Endothelial cell of umbilical vein (primary cell): ENCODE measurements at regions of chr6 and their contacts with region 1.

Region 1: DNA sequence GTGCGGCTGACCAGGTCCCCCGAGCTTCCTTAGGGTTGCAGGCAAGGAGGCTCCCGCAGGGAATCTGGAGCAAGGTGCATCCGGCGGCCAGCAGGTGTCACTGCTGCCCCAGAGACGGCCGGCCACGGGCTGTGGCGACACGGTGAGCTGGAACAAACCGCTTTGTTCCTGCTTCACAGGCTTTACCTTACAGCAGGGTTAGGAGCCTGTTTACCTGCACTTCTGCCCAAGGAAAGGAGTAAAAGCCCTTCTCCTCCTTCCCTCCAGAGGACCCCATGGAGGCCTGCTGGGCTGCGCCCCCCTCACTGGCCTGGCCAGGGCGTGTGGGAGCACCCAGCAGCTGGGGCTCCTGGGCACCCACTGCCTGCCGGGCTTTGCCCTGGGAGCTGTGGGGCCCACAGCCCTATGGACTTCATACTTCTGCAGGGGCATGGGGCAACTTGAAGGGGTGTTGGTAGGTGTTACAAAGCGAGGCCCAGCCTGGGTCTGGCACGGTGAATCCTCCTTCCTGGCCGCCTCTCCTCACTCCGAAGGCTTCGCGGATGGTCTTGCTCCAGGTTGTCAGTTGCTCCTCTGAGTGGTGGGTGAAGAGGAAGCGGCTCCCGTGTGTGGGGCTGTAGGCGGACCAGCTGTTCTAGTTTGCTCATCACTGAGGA is 88.4 kb downstream of the CDC5L start:
- DNase-seq: peak; percentile 75
- H3K4me3 ChIP-seq: no peak overlapping the region
- H3K27ac ChIP-seq: no peak overlapping the region
- H3K4me1 ChIP-seq: no peaks in the 10 kb centered on the region
- H3K27me3 ChIP-seq: peaks cover 0 to 6% of the 10 kb centered on the region in 2 experiments
- CTCF ChIP-seq: peak; percentile 90 to 97
- POLR2A ChIP-seq: no peak

Region 2: DNA sequence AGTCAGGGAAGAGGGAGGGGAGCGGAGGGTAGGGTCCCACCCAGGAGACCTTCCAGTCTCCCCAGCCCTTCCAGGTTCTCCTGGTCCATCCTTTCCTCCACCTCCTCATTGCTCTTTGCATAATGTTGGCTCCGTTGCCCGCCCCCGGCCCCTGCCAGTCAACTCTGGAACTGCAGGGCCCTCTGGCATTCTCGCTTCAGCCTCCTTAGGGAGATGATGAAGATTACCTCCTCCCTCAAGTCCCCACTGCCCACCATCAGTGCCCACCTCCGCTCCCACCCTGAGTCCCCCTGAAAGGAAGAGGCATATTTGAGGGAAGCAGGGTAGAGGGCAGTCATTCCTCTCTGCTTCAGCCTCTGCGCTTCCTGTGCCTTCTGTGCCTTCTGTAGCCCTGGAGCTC is 340.0 kb before region 1 on chr6:
- CTCF ChIA-PET with region 1: no interaction called
- POLR2A ChIA-PET with region 1: no interaction called
- dilution Hi-C with region 1: no loop called
- intact Hi-C with region 1: no loop called
- DNase-seq: no peak
- H3K4me3 ChIP-seq: no peak overlapping the region
- H3K27ac ChIP-seq: no peak overlapping the region
- H3K4me1 ChIP-seq: no peaks in the 10 kb centered on the region
- H3K27me3 ChIP-seq: no peaks in the 10 kb centered on the region
- CTCF ChIP-seq: no peak
- POLR2A ChIP-seq: no peak

Region 3: GRCh38 chr6:44489910-44490604 is 14.2 kb after region 1 on chr6:
- CTCF ChIA-PET with region 1: interaction called, 110 read pairs
- POLR2A ChIA-PET with region 1: no interaction called
- dilution Hi-C with region 1: no loop called
- intact Hi-C with region 1: loop called (anchors 1 kb)
- DNase-seq: peak; percentile 97
- H3K4me3 ChIP-seq: peak overlapping the region in 1 of 3 experiments; percentile 39
- H3K27ac ChIP-seq: peak overlapping the region; percentile 94
- H3K4me1 ChIP-seq: peaks cover 22% of the 10 kb centered on the region
- H3K27me3 ChIP-seq: no peaks in the 10 kb centered on the region
- CTCF ChIP-seq: no peak
- POLR2A ChIP-seq: no peak

Region 4: DNA sequence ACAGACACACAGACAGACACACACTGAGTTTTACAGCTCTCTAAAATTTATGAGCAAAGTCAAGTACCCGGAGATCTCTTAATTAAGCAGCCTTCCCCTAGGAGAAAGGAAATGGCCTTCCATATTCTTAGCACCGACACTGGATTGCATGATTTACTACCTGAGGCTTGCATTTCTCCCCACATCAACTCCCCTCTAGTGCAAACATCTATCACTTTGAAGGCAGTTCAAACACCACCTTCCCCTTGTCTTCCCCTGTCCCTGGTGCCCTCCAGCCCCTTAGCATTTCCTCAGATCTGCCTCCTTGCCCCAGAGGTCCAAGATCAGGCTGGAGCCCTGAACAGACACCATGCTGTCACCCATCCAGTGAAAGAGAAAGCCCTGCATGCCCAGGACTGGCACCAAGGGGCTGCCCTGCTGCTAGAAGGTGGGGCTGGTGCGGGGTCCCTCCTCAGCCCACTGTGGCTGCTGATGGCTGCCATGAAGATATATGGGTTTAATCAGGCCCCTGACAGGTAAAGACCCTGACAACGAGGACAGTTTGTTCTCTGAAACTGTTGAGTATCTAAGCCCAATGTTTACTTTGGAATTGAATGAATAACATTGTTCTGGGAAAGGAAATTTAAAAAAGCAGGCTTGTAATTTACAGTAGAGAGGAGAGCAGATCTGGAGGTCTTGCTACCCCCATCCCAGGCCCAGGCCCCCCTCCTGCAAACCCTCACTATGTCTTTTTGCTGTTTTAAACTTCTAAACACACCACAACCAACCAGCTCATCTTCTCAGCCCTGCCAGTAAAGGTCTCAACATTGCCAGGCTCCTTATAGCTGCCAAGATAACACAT is 82.7 kb after region 1 on chr6:
- CTCF ChIA-PET with region 1: interaction called, 10 read pairs
- POLR2A ChIA-PET with region 1: interaction called, 5 read pairs
- dilution Hi-C with region 1: no loop called
- intact Hi-C with region 1: no loop called
- DNase-seq: peak; percentile 31
- H3K4me3 ChIP-seq: no peak overlapping the region
- H3K27ac ChIP-seq: no peak overlapping the region
- H3K4me1 ChIP-seq: no peaks in the 10 kb centered on the region
- H3K27me3 ChIP-seq: peaks cover 3 to 8% of the 10 kb centered on the region in 2 experiments
- CTCF ChIP-seq: no peak
- POLR2A ChIP-seq: no peak

Region 5: GRCh38 chr6:44614396-44614795 is 138.5 kb after region 1 on chr6:
- CTCF ChIA-PET with region 1: interaction called, 34 read pairs
- POLR2A ChIA-PET with region 1: no interaction called
- dilution Hi-C with region 1: no loop called
- intact Hi-C with region 1: loop called (anchors 5 kb)
- DNase-seq: no peak
- H3K4me3 ChIP-seq: no peak overlapping the region
- H3K27ac ChIP-seq: no peak overlapping the region
- H3K4me1 ChIP-seq: no peaks in the 10 kb centered on the region
- H3K27me3 ChIP-seq: no peaks in the 10 kb centered on the region
- CTCF ChIP-seq: no peak
- POLR2A ChIP-seq: no peak

Region 6: DNA sequence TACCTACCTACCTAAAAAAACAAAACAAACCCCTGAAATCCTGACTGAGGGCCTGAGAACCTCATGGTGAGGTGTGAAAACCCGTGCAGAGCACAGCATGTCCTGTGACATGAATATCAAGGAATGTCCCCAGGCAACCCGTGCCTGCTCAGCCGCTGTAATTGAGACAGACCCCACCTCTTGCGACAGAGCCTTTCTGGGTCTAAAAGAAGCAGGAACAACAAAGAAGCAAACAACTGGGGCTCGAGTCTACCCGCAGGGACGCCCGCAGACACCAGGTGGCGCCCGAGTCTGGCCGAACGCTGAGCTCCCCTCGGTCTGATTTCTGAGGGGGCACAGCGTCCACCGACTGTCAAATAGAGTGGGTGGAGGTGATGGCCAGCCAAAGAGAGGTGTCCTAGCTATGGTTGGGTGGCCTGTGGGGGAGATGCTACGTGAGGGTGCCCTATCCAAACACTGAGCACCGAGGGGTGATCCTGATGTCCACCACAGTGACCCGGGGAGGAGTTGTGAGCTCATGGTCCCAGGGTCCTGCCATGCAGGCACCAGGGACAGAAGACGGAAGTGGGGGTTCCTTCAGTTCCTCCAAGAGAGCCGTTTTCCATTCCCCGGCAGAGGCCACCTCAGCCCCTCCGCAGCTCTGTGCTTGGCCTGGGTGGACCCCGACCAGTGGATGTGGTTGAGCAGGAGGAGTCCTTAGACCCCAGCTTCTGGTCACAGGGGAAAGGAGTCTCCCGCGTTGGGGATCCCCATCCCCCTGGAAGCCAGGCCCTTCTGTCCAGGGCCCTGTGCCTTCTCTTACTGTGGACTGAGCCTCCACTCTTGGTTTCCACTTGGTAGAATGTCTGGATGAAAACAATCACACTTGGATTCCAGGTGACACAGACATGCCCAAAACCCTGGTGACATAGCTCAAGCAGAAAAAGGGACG is 179.8 kb after region 1 on chr6:
- CTCF ChIA-PET with region 1: interaction called, 113 read pairs
- POLR2A ChIA-PET with region 1: no interaction called
- dilution Hi-C with region 1: no loop called
- intact Hi-C with region 1: loop called (anchors 2 kb)
- DNase-seq: peak; percentile 52
- H3K4me3 ChIP-seq: no peak overlapping the region
- H3K27ac ChIP-seq: no peak overlapping the region
- H3K4me1 ChIP-seq: no peaks in the 10 kb centered on the region
- H3K27me3 ChIP-seq: peaks cover 11 to 23% of the 10 kb centered on the region in 2 experiments
- CTCF ChIP-seq: peak; percentile 88 to 98
- POLR2A ChIP-seq: no peak

Region 7: DNA sequence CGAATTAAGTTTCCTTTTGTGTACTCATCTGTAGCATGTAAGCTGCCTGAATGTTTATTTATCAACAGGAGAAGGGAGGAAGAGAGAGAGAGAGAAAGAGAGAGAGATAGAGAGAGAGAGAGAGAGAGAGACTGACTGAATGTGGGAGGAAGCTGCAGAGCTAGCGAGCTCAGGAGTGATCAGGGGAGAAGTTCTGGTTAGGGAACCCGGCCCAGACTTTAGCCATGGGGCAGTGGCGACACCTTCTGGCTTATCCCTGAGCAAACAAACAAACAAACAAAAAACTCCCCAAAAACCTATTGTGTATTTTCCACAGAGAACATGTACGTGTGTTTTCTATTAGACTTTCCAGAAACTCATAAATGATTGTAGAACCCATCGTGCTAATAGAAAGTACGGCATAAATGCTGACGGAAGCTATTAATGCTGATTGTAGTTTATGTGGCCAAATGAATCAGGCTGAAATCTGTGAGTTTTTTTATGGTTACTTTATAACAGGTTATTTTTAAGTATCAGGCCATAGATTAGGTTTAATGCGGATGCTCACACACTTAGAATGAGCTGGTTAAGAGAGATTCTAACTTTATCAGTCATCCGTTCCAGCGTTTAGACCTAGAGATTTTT is 1446.9 kb after region 1 on chr6:
- CTCF ChIA-PET with region 1: interaction called, 77 read pairs
- POLR2A ChIA-PET with region 1: no interaction called
- dilution Hi-C with region 1: no loop called
- intact Hi-C with region 1: loop called (anchors 2 kb)
- DNase-seq: peak; percentile 40
- H3K4me3 ChIP-seq: no peak overlapping the region
- H3K27ac ChIP-seq: no peak overlapping the region
- H3K4me1 ChIP-seq: no peaks in the 10 kb centered on the region
- H3K27me3 ChIP-seq: peaks cover 0 to 4% of the 10 kb centered on the region in 2 experiments
- CTCF ChIP-seq: peak; percentile 56 to 68
- POLR2A ChIP-seq: no peak